Pancreas (tissue), 10 donors: ENCODE measurements at regions of chr1 and their contacts with region 1.

Region 1: DNA sequence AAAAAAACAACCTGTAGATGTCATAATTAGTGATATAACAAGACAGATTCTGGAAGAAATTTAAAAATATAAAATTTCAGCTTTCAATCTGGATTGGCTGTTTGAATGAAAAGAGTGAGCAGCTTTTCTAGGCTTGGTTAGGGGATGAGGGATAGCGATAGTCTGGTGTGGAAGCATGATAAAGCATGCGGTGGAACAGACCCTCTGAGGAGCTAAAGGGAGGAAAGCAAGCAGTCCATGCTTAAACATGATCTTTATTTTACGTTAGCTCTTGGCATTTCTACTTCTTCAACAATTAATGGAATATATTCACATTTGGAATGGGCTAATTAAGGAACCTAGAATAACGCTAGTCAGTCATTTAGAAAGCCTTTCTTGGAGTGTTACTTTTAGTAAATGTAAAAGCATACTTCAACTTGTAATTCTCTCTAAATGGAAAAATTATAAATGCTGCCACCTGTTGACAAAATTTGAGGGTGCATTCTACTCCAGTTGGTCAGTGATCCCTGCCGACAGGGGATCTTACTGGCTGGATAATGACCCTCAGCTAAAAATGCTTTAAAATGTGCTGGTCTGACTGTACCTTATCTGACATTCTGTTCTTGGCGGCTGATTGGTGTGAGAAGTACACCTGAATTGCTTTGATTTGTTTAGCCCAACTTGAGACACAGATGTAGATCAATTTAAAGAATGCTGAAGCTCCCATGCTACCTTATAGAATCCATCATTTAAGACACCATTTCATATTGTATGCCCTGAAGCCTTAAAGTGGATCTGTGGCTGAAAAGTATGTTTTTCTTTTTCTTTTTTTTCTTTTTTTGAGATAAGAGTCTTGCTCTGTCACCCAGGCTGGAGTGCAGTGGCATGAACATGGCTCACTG is 61.2 kb downstream of the AK4 start:
- DNase-seq: peak in 2 of 6 donors; percentile 17 to 29
- ATAC-seq: peak; percentile 62 to 80 (median 76)
- H3K4me3 ChIP-seq: no peak overlapping the region
- H3K27ac ChIP-seq: no peak overlapping the region
- H3K4me1 ChIP-seq: peaks cover 0 to 6% (median 0%) of the 10 kb centered on the region in 3 donors
- H3K27me3 ChIP-seq: no peaks in the 10 kb centered on the region
- CTCF ChIP-seq: peak; percentile 38 to 63 (median 52)

Region 2: DNA sequence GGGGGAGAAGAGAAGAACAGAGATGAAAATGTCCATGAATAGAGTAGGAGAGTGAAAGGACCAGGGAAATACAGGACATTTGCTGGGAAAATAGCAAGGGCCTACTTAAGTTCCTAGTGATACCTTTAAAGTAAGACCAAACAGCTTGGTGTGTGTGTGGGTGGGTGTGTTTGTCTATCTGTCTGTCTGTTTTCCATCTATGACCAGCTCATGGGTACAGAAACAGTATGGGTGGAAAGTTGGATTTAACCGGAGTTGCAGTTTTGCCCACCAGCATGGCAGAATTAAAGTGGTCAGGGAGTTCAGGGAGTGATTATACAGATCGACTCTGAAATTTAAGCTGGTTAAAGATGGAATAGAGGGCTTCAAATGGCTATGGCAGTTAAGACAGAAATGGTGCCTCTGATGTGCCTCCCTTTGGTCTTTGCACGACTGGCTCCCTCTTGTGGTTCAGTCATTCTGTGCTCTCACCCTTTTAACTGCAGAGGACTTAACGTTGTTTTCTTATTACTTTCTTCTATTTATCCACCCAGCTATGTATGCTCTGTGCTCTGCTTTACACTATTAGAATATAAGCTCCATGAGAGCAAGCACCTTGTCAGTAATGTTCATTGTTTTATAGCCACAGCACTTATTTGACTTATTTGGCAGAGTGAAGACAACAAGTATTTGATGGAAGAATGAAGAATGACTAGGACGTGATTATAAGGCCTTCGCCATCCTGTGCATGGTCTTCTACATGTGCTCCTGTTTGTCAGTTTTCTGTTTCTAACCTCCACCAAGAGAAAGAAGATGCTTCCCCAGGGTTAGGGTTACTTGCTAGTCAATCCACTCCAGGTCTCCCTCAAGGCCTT is 133.9 kb before region 1 on chr1:
- intact Hi-C with region 1: loop called in 1 of 3 experiments (anchors 10 kb)
- DNase-seq: peak in 3 of 6 donors; percentile 43 to 61 (median 54)
- ATAC-seq: peak; percentile 80 to 98 (median 94)
- H3K4me3 ChIP-seq: no peak overlapping the region
- H3K27ac ChIP-seq: no peak overlapping the region
- H3K4me1 ChIP-seq: no peaks in the 10 kb centered on the region
- H3K27me3 ChIP-seq: no peaks in the 10 kb centered on the region
- CTCF ChIP-seq: peak; percentile 45 to 60 (median 54)